Upper lobe of right lung (tissue), 1 donor: ENCODE measurements at regions of chr18 and their contacts with region 1.

Region 1: GRCh38 chr18:35949903-35950627 is 22.4 kb upstream of the RMP24 start:
- DNase-seq: peak; percentile 73
- ATAC-seq: peak; percentile 95
- H3K4me3 ChIP-seq: peak overlapping the region; percentile 53
- H3K27ac ChIP-seq: no peak overlapping the region
- H3K4me1 ChIP-seq: peaks cover 5% of the 10 kb centered on the region
- H3K27me3 ChIP-seq: no peaks in the 10 kb centered on the region
- CTCF ChIP-seq: peak; percentile 98

Region 2: DNA sequence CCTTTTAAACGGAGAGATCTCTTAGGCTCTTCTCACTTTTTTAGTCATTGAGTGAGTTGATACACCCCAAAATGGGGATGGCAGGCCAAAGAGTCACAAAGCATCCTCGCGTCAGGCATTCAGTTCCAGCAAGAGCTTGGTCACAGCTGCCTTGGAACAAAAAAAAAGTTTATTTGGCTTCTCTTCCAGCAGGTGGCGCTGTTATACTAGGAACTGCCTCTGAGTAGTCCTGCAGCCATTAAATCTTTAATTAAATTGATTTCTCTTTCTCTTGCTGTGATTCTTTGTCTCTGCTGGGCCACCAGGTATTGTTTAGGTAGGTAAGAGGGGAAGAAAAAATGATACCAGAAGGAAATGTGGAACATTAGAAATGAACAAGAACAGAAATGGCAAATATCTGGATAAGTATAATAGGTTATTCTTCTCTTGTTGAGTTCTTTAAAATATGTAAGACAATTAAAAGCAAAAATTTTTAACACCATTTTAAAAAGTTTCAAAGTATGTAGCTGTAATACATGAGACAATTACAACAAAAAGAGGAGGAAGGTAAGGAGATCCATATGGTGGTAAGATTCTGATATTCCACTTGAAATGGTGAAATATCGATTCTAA is 193.5 kb before region 1 on chr18:
- intact Hi-C with region 1: loop called (anchors 5 kb)
- DNase-seq: no peak
- ATAC-seq: peak; percentile 89
- H3K4me3 ChIP-seq: no peak overlapping the region
- H3K27ac ChIP-seq: no peak overlapping the region
- H3K4me1 ChIP-seq: no peaks in the 10 kb centered on the region
- H3K27me3 ChIP-seq: no peaks in the 10 kb centered on the region
- CTCF ChIP-seq: peak; percentile 85